GM10248 (cell line): ENCODE measurements at regions of chr10 and their contacts with region 1.

Region 1: DNA sequence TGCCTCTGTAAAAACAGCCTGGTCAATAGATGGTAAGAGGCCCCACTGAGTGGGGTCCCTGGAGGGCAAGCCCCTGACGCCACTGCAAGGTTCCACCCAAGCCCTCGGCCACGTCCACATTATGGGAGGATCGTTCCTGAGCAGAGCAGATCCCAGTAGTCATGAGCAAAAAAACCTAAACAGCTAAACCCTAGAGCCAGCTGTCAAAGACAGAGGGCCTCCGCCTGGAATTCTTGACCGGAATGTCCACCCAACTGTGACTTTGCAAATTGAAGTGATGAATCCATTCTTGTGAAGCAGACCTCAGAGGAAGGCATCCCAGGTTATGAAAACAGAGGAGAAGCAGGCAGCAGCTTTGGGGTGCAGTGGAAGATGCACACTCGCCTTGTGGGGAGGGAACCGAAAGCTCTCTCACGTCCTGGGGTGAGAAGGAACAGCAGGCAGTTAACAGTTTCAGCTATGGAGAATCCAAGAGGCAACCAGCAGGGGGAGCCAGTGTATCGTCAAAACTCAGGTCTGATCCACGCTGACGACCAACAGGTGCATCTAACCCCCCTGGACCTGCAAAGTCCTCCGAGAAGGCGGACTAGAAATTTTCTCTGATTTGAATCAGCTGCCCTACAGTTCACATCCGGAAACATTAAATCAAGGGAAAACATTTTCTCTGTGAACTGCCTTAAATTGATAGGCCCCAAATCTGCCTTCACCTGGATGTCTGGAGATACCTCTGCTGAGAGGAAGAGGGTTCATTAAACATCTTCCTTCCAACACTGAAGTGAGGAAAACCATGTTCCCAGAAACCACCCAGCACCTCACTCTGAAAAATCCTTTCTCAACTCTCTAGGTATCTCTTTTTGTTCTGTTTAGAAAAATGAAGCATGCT is 139.1 kb upstream of the PFKP start:
- DNase-seq: peak; percentile 87
- CTCF ChIP-seq: peak; percentile 75

Region 2: DNA sequence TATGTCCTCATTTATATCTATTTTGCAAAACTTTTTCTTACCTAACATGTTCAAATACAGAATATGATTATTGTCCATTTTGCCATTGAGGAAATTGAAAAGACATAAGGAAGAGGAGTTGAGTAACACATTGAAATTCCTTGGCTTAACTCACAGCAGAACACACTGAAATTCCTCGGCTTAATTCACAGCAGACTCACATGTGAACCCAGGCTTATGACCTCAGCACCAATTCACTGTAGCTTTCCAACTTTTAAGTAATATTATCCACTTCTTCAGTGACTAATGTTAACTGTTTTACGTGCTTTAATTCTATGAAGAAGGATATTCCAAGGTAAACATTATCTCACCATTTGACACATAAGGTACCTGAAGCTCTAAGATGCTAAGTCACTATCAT is 458.4 kb before region 1 on chr10:
- CTCF ChIA-PET with region 1: no interaction called
- POLR2A ChIA-PET with region 1: no interaction called
- DNase-seq: no peak
- CTCF ChIP-seq: no peak

Region 3: DNA sequence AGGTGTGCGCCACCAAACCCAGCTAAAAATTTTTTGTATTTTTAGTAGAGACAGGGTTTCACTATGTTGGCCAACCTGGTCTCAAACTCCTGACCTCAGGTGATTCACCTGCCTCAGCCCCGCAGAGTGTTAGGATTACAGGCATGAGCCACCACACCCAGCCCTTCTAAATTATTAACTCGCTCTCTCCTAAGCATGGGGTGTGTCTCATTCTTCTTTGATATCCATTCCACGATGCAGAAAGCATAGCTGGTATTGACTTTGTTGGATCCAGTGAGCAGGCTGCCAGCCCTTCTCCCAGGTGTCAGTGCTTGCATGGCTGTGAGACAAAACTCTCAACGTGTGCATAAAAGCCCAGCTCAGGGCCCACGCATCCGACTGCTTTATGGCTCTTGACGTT is 114.9 kb before region 1 on chr10:
- CTCF ChIA-PET with region 1: no interaction called
- POLR2A ChIA-PET with region 1: no interaction called
- DNase-seq: no peak
- CTCF ChIP-seq: no peak

Region 4: GRCh38 chr10:2874963-2875362 is 53.2 kb before region 1 on chr10:
- CTCF ChIA-PET with region 1: no interaction called
- POLR2A ChIA-PET with region 1: no interaction called
- DNase-seq: no peak
- CTCF ChIP-seq: no peak

Region 5: GRCh38 chr10:2938869-2939268 is 10.7 kb after region 1 on chr10:
- CTCF ChIA-PET with region 1: interaction called, 11 read pairs
- POLR2A ChIA-PET with region 1: no interaction called
- DNase-seq: no peak
- CTCF ChIP-seq: no peak

Region 6: GRCh38 chr10:2949948-2950354 is 21.8 kb after region 1 on chr10:
- CTCF ChIA-PET with region 1: interaction called, 11 read pairs
- POLR2A ChIA-PET with region 1: no interaction called
- DNase-seq: no peak
- CTCF ChIP-seq: no peak